MCF 10A (cell line): ENCODE measurements at regions of chr4 and their contacts with region 1.

Region 1: GRCh38 chr4:93764639-93765246 is 63.8 kb upstream of the ATOH1 start:
- DNase-seq: peak; percentile 71
- H3K4me3 Mint-ChIP-seq: no peak overlapping the region
- H3K27ac Mint-ChIP-seq: no peak overlapping the region
- H3K4me1 Mint-ChIP-seq: no peaks in the 10 kb centered on the region
- H3K27me3 Mint-ChIP-seq: no peaks in the 10 kb centered on the region
- CTCF ChIP-seq: peak; percentile 73

Region 2: GRCh38 chr4:92305148-92305877 is 1459.4 kb before region 1 on chr4:
- CTCF ChIA-PET with region 1: interaction called, 4 read pairs
- POLR2A ChIA-PET with region 1: no interaction called
- intact Hi-C with region 1: loop called (anchors 5 kb)
- DNase-seq: peak; percentile 29
- H3K4me3 Mint-ChIP-seq: peak overlapping the region; percentile 58
- H3K27ac Mint-ChIP-seq: peak overlapping the region; percentile 10
- H3K4me1 Mint-ChIP-seq: peaks cover 15% of the 10 kb centered on the region
- H3K27me3 Mint-ChIP-seq: peaks cover 14% of the 10 kb centered on the region
- CTCF ChIP-seq: no peak

Region 3: GRCh38 chr4:93157994-93158393 is 606.7 kb before region 1 on chr4:
- CTCF ChIA-PET with region 1: interaction called, 3 read pairs
- POLR2A ChIA-PET with region 1: no interaction called
- intact Hi-C with region 1: loop called (anchors 1 kb)
- DNase-seq: peak; percentile 22
- H3K4me3 Mint-ChIP-seq: no peak overlapping the region
- H3K27ac Mint-ChIP-seq: no peak overlapping the region
- H3K4me1 Mint-ChIP-seq: no peaks in the 10 kb centered on the region
- H3K27me3 Mint-ChIP-seq: no peaks in the 10 kb centered on the region
- CTCF ChIP-seq: peak; percentile 38

Region 4: GRCh38 chr4:93710101-93710846 is 54.5 kb before region 1 on chr4:
- CTCF ChIA-PET with region 1: interaction called, 7 read pairs
- POLR2A ChIA-PET with region 1: no interaction called
- intact Hi-C with region 1: loop called (anchors 2 kb)
- DNase-seq: peak; percentile 35
- H3K4me3 Mint-ChIP-seq: no peak overlapping the region
- H3K27ac Mint-ChIP-seq: no peak overlapping the region
- H3K4me1 Mint-ChIP-seq: no peaks in the 10 kb centered on the region
- H3K27me3 Mint-ChIP-seq: no peaks in the 10 kb centered on the region
- CTCF ChIP-seq: peak; percentile 26